ENCODE measurements at regions of chr6 and their contacts with region 1.

Region 1: GRCh38 chr6:158003910-158004700 is 22.4 kb downstream of the SYNJ2 start:
- H3K4me3 Mint-ChIP-seq: peak overlapping the region; percentile 57
- H3K27ac Mint-ChIP-seq: peak overlapping the region; percentile 88
- H3K4me1 Mint-ChIP-seq: peaks cover 85% of the 10 kb centered on the region
- H3K27me3 Mint-ChIP-seq: peaks cover 5% of the 10 kb centered on the region

Region 2: DNA sequence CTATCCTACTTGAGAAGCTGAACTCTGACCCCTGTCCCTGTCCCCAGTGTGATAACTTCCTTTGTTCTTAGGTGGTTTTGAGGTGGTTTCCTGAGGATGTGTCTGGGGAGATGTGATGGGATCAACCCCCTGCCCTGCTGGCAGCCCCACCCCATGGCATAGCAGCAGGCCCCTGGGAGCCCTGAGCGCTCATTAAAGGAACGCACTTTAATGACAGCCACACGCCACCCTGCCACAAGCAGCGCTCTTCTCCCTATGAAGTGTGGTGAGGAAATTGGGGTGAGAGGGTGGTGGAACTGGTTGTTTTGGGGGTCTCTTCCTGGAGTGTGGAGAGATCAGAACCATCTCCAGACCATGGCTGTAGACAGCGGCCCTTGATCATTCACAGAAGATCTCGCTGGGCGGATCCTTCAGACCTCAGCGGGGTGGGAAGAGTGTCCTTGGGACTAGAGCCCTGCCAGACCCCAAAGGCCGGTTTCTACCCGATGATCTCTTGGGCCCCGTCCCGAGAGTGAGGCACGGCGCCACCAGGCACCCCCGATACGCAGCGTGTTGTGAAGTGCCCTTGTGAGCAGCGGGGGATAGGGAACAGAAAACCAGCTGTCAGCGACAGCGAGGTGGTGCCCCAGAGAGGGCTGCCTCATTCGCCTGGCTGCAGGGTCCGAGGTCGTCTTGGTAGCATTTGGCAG is 22.9 kb after region 1 on chr6:
- intact Hi-C with region 1: loop called (anchors 1 kb)
- H3K4me3 Mint-ChIP-seq: no peak overlapping the region
- H3K27ac Mint-ChIP-seq: peak overlapping the region; percentile 92
- H3K4me1 Mint-ChIP-seq: peaks cover 65% of the 10 kb centered on the region
- H3K27me3 Mint-ChIP-seq: peaks cover 8% of the 10 kb centered on the region